Posterior cingulate gyrus (tissue), 11 donors: ENCODE measurements at regions of chr13 and their contacts with region 1.

Region 1: DNA sequence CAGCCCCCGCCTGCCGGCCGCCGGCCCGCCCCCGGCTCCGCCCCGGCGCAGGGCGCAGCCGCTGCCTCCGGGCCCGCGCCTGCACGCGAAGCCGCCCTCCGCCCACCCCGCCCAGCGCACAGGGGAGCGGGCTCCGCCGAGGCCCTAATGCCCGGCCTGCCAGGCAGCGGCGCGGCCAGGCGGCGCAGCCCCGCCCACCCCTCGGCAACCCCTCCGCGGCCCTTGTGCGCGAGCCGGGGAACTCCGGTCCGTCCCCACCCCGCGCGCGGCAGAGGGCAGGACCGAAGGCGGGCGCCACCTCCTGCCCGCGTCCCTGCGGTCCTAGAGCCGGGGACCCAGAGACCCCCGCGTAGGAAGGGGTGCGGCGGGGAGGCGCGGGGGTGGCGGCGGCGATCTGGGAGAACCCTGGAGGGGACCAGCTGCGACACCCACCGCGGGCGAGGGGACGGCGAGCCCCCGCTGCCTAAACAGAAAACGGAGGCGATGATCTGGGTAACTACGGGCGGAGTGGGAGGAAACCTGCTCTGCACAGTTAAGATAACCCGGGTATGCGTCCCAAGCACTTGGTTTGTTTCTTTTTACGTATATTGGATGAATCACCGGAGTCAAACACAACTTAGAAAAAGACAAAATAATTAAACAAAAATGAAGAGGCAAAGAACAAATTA is 350 bp upstream of the USP12 start:
- DNase-seq: peak; percentile 78 to 98 (median 87)

Region 2: DNA sequence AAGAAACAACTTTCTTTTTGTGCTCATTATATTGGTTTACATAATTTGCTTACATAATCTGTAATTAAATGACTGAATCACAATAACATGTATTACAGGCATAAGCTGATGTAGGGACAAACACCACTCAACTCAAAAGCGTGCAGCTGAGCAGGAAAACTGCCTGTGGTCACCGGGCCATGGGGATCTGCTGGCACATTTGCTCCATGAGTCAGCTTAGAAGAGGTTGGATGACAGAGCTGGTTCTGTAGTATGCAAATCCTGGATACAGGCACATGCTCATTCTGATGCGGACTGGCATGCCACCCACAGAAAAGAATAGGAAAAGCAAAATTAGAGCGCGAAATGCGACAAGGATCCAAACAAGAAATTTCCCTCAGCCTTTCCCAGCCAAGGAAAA is 128.9 kb before region 1 on chr13:
- intact Hi-C with region 1: loop called (anchors 10 kb)
- DNase-seq: peak; percentile 39 to 94 (median 64)

Region 3: GRCh38 chr13:27251166-27252091 is 79.5 kb after region 1 on chr13 and contains the start of gene RPL21:
- intact Hi-C with region 1: loop called (anchors 5 kb)
- DNase-seq: peak; percentile 88 to 99 (median 96)

Region 4: DNA sequence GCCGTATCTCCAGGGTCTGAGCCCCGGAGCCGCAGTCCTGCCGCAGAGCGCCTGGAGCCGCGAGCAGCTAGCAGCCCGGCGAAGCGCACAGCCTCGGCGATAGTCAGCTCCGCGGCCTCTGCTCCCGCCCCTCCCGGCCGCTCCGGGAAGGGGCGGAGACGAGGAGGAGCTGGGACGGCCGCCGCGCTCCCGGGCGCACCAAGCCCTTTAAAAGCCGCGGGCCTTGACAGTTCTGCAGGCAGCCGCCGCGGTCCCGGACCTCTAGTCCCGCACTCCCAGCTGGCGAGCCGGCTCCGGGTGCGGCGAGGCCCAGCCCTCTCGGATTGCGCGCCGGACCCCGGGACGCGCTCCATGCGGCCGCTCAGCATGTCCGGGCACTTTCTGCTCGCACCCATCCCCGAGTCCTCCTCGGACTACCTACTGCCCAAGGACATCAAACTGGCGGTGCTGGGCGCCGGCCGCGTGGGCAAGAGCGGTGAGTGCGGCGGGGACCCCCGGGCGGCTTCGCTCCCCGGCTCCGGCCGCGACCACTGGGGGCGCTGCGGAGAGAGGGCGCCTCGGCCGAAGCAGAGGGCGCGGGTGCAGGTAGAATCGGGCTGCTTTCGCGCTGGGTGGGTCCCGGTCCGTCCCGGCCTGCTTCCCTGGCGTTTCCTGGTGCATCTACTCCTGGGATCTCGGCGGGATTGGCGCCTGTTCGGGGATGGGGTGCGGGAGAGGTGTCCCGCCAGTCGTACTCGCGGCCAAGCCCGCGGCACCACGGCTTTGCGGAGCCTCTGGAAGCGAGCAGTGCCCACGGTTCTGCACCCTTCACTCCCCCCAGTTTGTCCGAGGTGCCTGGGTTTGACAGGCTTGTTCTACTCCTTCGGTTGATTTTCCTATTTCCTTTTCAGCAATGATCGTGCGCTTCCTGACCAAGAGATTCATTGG is 98.9 kb after region 1 on chr13 and contains the start of gene RASL11A:
- intact Hi-C with region 1: loop called (anchors 5 kb)
- DNase-seq: peak; percentile 73 to 98 (median 82)

Region 5: GRCh38 chr13:27362064-27362883 is 190.3 kb after region 1 on chr13:
- intact Hi-C with region 1: loop called (anchors 2 kb)
- DNase-seq: peak; percentile 73 to 97 (median 86)